ENCODE measurements at regions of chr9 and their contacts with region 1.

Region 1: GRCh38 chr9:96217754-96218693 is 84.0 kb downstream of the HSD17B3 start:
- DNase-seq: peak; percentile 64
- H3K4me3 Mint-ChIP-seq: peak overlapping the region; percentile 38
- H3K27ac Mint-ChIP-seq: no peak overlapping the region
- H3K4me1 Mint-ChIP-seq: peaks cover 4% of the 10 kb centered on the region
- H3K27me3 Mint-ChIP-seq: peaks cover 63% of the 10 kb centered on the region
- CTCF ChIP-seq: peak; percentile 98

Region 2: DNA sequence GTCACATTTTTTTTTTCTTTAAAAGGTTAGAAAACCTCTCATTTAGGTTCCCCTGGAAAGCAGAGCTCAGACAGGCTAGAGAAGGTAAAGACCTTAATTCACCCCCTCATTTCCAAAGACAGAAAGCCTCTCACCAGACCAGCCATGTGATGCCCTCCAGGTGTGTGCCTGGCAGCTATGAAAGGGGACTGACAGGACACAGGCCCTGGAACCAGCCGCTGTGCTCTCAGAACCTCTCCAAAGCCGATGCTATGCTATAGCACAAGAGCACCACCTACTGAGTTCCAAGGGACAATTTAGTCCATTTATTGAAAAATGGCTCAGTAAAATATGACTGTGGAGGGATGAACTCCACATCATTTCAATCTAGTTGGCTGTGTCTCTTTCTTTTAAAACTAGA is 949.3 kb before region 1 on chr9:
- CTCF ChIA-PET with region 1: interaction called, 3 read pairs
- POLR2A ChIA-PET with region 1: no interaction called
- intact Hi-C with region 1: loop called (anchors 5 kb)
- DNase-seq: peak; percentile 29
- H3K4me3 Mint-ChIP-seq: no peak overlapping the region
- H3K27ac Mint-ChIP-seq: no peak overlapping the region
- H3K4me1 Mint-ChIP-seq: no peaks in the 10 kb centered on the region
- H3K27me3 Mint-ChIP-seq: no peaks in the 10 kb centered on the region
- CTCF ChIP-seq: no peak

Region 3: DNA sequence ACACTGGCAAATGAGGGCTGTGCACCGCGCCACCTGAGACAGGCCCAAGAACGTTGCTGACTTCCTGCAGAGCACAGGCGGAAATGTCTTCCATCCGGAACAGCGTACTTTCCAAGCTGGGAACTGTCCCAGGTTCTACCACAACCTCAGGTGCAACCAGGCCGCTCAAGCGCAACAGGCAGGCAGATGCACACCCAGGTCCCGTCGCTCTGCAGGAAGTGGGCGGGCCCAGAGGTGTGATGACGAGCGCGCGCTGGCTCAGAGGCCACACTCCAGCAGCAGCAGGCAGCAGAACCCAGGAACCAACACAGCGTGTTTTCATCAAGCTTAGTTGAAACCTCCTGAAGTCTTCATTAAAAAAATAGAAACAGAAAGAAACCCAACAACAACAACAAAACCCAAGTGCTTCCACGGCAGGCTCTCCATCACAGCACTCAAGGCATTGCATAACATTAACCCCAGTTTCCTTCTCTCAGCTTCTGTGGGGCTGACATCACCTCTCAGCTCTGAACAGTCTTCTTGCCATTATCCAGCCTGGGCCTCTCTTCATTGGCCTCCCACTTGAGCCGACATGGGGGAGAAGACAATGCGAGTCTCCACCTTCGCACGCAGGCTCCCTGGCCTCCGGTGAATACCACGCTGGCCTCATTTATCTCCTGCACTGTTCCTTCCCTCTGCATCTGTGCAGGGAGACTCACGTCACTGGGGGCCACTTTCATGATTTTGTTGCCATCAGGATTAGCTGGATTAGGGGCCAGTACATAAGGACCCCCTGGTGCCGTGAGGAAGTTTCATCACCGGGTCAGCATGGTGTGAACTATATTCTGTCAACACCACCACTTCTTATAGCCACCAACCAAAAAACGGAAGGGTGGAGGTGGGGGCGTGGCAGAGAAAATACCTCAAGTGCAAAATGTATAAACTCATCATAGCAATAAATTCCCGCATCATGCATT is 723.3 kb before region 1 on chr9:
- CTCF ChIA-PET with region 1: interaction called, 4 read pairs
- POLR2A ChIA-PET with region 1: no interaction called
- intact Hi-C with region 1: loop called (anchors 5 kb)
- DNase-seq: no peak
- H3K4me3 Mint-ChIP-seq: no peak overlapping the region
- H3K27ac Mint-ChIP-seq: peak overlapping the region; percentile 39
- H3K4me1 Mint-ChIP-seq: no peaks in the 10 kb centered on the region
- H3K27me3 Mint-ChIP-seq: no peaks in the 10 kb centered on the region
- CTCF ChIP-seq: no peak

Region 4: GRCh38 chr9:95726756-95727155 is 491.3 kb before region 1 on chr9:
- CTCF ChIA-PET with region 1: interaction called, 9 read pairs
- POLR2A ChIA-PET with region 1: no interaction called
- intact Hi-C with region 1: loop called (anchors 2 kb)
- DNase-seq: peak; percentile 67
- H3K4me3 Mint-ChIP-seq: no peak overlapping the region
- H3K27ac Mint-ChIP-seq: no peak overlapping the region
- H3K4me1 Mint-ChIP-seq: no peaks in the 10 kb centered on the region
- H3K27me3 Mint-ChIP-seq: no peaks in the 10 kb centered on the region
- CTCF ChIP-seq: peak; percentile 62

Region 5: GRCh38 chr9:96232539-96233241 is 14.7 kb after region 1 on chr9:
- CTCF ChIA-PET with region 1: interaction called, 12 read pairs
- POLR2A ChIA-PET with region 1: no interaction called
- intact Hi-C with region 1: no loop called
- DNase-seq: peak; percentile 79
- H3K4me3 Mint-ChIP-seq: no peak overlapping the region
- H3K27ac Mint-ChIP-seq: no peak overlapping the region
- H3K4me1 Mint-ChIP-seq: peaks cover 6% of the 10 kb centered on the region
- H3K27me3 Mint-ChIP-seq: peaks cover 59% of the 10 kb centered on the region
- CTCF ChIP-seq: peak; percentile 84